PC-3 (cell line): ENCODE measurements at regions of chr1 and their contacts with region 1.

Region 1: DNA sequence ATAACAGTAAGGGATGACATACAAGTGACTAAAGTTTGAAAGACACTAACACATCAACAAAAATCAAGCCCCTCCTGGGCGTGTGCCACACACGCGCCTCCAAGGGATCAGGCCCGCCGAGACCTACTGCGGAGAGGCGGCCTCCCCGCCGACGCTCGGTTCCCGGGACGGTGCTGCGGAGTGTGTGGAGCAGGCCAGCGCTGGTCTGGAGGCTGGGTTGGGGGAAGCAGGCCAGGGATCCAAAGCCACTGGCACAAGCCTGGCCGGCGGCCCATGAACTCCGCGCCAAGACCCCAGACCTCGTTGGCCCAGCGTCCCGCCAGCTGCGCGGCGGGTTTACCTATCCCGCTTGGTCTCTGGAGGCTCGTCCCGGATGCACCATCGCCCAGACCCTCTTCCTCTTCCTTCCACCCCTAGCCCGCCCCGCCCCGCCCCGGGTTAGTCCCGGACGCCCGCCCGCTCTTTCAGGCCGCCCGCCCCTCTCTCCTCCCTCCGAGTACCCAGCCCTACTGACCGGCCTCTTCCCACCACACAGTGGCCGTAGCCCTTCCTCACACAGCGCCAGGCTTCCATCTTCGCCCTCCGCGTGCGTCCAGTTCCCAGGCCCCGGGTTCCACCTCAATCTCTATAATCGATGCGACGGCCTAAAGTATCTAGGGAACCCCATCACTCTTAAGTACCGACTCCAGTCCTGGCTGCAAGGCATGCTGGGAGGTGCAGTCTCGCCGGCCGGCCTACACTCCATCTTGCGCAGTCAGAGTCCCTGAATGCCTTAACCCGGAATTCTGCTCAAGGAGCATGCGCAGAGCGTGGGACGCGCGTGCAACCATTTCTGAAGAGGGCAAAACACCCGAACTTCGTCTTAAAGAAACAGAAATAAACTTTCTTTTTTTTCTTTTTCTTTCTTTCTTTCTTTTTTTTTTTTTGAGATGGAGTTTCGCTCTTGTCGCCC is at the start of gene ANGEL2:
- DNase-seq: peak; percentile 99
- ATAC-seq: peak; percentile 87
- H3K4me3 ChIP-seq: peak within 1 kb of the TSS; percentile 89
- H3K27ac ChIP-seq: peak within 1 kb of the TSS; percentile 69
- H3K4me1 ChIP-seq: peaks cover 43% of the 10 kb centered on the region
- H3K27me3 ChIP-seq: no peaks in the 10 kb centered on the region
- CTCF ChIP-seq: no peak
- total RNA-seq, gene ANGEL2: 27.0 and 36.8 TPM in 2 replicates

Region 2: DNA sequence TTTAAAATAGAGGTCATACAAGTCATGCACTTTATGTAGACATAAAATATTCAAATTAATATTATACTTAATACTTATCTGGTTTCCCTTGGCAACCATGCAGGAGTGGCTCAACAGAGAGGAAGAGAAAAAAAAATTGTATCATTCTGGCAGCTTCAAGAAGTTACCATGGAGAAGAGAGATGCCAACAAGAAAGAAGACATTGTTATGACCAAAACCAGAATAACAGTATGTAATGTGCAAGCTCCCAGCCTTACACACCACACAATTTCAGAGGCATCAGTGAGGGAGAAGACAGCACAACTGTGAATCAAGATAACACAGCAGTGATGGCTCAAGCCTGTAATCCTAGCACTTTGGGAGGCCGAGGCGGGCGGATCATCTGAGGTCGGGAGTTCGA is 1805.3 kb before region 1 on chr1:
- CTCF ChIA-PET with region 1: no interaction called
- POLR2A ChIA-PET with region 1: interaction called, 21 read pairs
- intact Hi-C with region 1: no loop called
- DNase-seq: no peak
- ATAC-seq: no peak
- H3K4me3 ChIP-seq: no peak overlapping the region
- H3K27ac ChIP-seq: no peak overlapping the region
- H3K4me1 ChIP-seq: no peaks in the 10 kb centered on the region
- H3K27me3 ChIP-seq: no peaks in the 10 kb centered on the region
- CTCF ChIP-seq: no peak

Region 3: GRCh38 chr1:212488397-212489283 is 526.7 kb before region 1 on chr1:
- CTCF ChIA-PET with region 1: no interaction called
- POLR2A ChIA-PET with region 1: no interaction called
- intact Hi-C with region 1: loop called (anchors 5 kb)
- DNase-seq: peak; percentile 76
- ATAC-seq: no peak; the same call in 1 of the 2 replicates
- H3K4me3 ChIP-seq: no peak overlapping the region
- H3K27ac ChIP-seq: peak overlapping the region; percentile 92
- H3K4me1 ChIP-seq: peaks cover 49% of the 10 kb centered on the region
- H3K27me3 ChIP-seq: no peaks in the 10 kb centered on the region
- CTCF ChIP-seq: no peak

Region 4: DNA sequence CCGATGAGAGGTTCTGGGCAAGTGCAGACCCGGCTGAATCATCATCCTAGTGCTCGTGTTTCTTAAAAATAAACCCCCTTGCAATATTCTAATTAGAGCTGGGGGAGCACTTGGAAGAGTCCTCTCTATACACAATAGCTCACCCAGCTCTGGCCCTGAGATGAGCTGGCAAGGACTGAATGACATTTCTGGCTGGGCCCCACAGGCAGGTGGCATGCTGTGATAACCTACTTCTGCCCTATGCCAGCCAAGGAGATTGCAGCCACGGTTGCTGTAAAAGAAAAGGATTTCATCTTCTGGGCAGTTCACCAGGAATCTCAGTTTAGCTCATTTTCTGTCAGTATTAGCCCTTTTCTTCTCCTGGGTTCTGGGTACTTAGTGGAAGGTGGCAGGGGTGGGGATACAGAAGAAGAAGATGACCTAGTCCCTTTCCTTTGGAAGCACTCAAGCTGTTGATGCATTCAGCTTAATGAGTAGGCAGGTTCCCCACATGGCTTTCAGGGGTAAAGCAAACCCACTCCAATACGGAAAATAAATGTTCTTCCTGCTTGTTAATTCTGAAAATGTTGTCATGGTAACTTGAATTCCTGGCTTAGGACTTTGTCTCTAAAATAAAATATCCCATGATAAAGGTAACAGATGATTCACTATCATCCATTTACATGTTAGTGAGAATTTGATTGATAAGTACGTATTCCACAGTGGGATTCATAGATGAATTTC is 32.8 kb before region 1 on chr1:
- CTCF ChIA-PET with region 1: no interaction called
- POLR2A ChIA-PET with region 1: no interaction called
- intact Hi-C with region 1: no loop called
- DNase-seq: no peak
- ATAC-seq: no peak
- H3K4me3 ChIP-seq: no peak overlapping the region
- H3K27ac ChIP-seq: no peak overlapping the region
- H3K4me1 ChIP-seq: peaks cover 2% of the 10 kb centered on the region
- H3K27me3 ChIP-seq: no peaks in the 10 kb centered on the region
- CTCF ChIP-seq: no peak

Region 5: DNA sequence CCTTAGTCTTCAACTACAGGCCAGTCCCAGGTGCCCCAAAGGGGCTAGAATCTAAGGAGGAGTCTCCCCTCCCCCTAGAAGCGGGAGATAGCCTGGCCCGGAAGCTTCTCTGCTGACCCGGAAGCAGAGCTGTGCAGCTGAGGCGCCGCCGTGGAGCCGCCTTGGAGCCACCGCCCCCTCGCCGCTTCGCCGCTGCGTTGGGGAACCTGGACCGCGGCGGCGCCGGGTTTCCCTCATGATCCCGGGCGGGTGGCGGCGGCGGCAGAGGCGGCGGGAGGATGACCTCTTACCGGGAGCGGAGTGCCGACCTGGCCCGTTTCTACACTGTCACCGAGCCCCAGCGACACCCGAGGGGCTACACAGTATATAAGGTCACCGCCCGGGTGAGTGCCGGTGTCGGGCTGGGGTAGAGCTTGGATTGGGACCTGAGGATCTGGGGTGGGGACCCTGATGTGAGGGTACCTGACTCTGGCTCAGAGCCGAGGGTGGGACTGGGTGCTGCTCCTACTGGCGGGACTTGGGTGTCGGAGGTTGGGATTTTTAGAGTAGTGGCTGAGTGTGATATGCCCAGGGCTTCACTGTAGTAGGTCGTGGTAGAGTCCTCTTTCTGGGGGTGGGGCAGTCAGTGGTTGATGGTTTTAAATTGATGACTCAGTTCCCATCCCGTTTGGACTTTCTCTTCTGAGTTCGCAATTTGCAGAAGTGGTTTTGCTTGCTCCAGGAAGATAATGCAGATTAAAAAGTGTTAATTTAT is 35.9 kb after region 1 on chr1 and contains the start of gene RPS6KC1:
- CTCF ChIA-PET with region 1: no interaction called
- POLR2A ChIA-PET with region 1: interaction called, 3 read pairs
- intact Hi-C with region 1: loop called (anchors 1 kb)
- DNase-seq: peak; percentile 87
- ATAC-seq: peak; percentile 94
- H3K4me3 ChIP-seq: peak within 1 kb of the TSS; percentile 88
- H3K27ac ChIP-seq: peak within 1 kb of the TSS; percentile 68
- H3K4me1 ChIP-seq: peaks cover 38% of the 10 kb centered on the region
- H3K27me3 ChIP-seq: no peaks in the 10 kb centered on the region
- CTCF ChIP-seq: 0 out of 2 replicates have a peak, but pooled peaks have one; percentile 18
- total RNA-seq, gene RPS6KC1: 21.1 and 22.3 TPM in 2 replicates

Region 6: DNA sequence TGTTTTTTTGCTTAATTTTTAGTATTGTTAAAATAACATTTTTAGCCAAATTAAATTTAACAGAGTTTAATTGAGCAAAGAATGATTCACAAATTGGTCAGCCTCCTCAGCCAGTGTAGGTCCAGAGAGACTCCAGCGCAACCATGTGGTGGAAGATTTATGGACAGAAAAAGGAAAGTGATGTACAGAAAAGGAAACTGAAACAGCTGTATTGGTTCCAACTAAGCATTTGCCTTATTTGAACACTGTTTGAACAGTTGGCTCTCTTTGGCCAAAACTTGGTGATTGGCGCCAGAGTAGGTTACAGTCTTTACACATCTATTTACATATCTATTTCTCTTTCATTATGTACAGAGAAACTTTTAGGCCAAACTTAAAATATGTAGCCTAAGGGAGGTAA is 55.0 kb after region 1 on chr1:
- CTCF ChIA-PET with region 1: interaction called, 5 read pairs
- POLR2A ChIA-PET with region 1: no interaction called
- intact Hi-C with region 1: loop called (anchors 1 kb)
- DNase-seq: peak; percentile 75
- ATAC-seq: peak; percentile 96
- H3K4me3 ChIP-seq: no peak overlapping the region
- H3K27ac ChIP-seq: no peak overlapping the region
- H3K4me1 ChIP-seq: peaks cover 4% of the 10 kb centered on the region; the same call in 1 of the 2 replicates
- H3K27me3 ChIP-seq: no peaks in the 10 kb centered on the region
- CTCF ChIP-seq: peak; percentile 61

Region 7: DNA sequence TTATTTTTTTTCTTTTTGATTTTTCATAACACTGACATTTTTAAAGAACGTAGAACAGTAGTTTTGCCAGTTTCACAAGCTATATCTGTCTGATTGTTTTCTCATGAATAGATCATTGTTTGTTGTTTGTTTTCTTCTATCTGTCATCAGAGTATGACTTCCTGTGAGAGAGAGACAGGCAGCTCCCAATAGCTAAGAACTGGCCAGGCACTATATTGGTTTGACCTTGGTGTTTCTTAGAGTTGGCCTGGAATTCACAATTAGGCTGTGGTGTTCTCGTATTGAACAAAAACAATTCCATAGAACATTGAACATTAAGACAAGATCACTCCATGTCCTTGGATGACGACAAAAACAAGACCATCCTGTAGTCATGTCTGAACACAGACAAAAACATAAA is 79.1 kb after region 1 on chr1:
- CTCF ChIA-PET with region 1: no interaction called
- POLR2A ChIA-PET with region 1: interaction called, 18 read pairs
- intact Hi-C with region 1: no loop called
- DNase-seq: no peak
- ATAC-seq: peak; percentile 51
- H3K4me3 ChIP-seq: no peak overlapping the region
- H3K27ac ChIP-seq: no peak overlapping the region
- H3K4me1 ChIP-seq: peaks cover 5% of the 10 kb centered on the region; the same call in 1 of the 2 replicates
- H3K27me3 ChIP-seq: no peaks in the 10 kb centered on the region
- CTCF ChIP-seq: no peak